ENCODE measurements at regions of chr1 and their contacts with region 1.

Region 1: GRCh38 chr1:16888860-16889816 is 6.6 kb upstream of the RNU1-2 start:
- DNase-seq: peak; percentile 26 to 78 (median 56)
- ATAC-seq: peak; percentile 74
- H3K4me3 ChIP-seq: peak overlapping the region; percentile 70
- H3K4me3 Mint-ChIP-seq: peak overlapping the region; percentile 95
- H3K27ac ChIP-seq: peak overlapping the region; percentile 29 to 54
- H3K27ac Mint-ChIP-seq: peak overlapping the region; percentile 92
- H3K4me1 ChIP-seq: peaks cover 16% of the 10 kb centered on the region
- H3K4me1 Mint-ChIP-seq: peaks cover 27% of the 10 kb centered on the region
- H3K27me3 ChIP-seq: no peaks in the 10 kb centered on the region
- H3K27me3 Mint-ChIP-seq: no peaks in the 10 kb centered on the region
- CTCF ChIP-seq: peak; percentile 12

Region 2: GRCh38 chr1:16904560-16905111 is 15.5 kb after region 1 on chr1:
- CTCF ChIA-PET with region 1: no interaction called
- POLR2A ChIA-PET with region 1: interaction called, 65 read pairs
- intact Hi-C with region 1: no loop called
- DNase-seq: peak; percentile 97 to 100 (median 99)
- ATAC-seq: peak; percentile 93
- H3K4me3 ChIP-seq: peak overlapping the region; percentile 63
- H3K4me3 Mint-ChIP-seq: no peak overlapping the region
- H3K27ac ChIP-seq: peak overlapping the region; percentile 98 to 99
- H3K27ac Mint-ChIP-seq: no peak overlapping the region
- H3K4me1 ChIP-seq: peaks cover 55% of the 10 kb centered on the region
- H3K4me1 Mint-ChIP-seq: peaks cover 36% of the 10 kb centered on the region
- H3K27me3 ChIP-seq: no peaks in the 10 kb centered on the region
- H3K27me3 Mint-ChIP-seq: no peaks in the 10 kb centered on the region
- CTCF ChIP-seq: no peak

Region 3: DNA sequence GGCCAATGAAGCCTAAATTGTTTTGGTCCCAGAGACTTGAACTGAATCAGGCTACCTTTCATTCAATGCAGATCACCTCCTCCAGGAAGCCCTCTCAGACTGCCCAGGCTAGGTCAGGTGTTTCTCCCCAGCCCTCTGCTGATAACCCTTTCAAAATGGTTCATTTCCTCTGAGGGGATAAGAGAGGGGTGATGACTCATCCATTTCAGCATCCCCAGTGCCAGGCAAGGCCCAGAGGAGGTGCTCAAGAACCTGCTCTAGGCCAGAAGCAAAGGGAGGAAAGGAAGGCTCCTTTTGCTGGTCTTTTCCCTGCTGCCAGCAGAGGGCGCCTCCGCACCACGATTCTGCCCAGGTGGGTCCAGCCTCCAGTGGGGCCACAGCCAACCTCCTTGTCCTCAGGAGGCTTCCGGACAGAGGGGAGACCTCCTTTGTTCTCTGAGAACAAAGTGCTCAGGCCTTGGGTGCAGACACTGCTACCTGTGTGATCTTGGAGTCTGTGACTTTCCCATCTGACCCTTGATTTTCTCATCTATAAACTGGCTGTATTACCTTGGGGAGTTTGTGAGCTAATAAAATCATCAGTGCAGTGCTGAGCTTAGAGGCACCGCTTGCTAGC is 605.1 kb after region 1 on chr1:
- CTCF ChIA-PET with region 1: no interaction called
- POLR2A ChIA-PET with region 1: no interaction called
- intact Hi-C with region 1: no loop called
- DNase-seq: peak; percentile 36 to 73 (median 45)
- ATAC-seq: peak; percentile 70
- H3K4me3 ChIP-seq: no peak overlapping the region
- H3K4me3 Mint-ChIP-seq: no peak overlapping the region
- H3K27ac ChIP-seq: no peak overlapping the region
- H3K27ac Mint-ChIP-seq: no peak overlapping the region
- H3K4me1 ChIP-seq: no peaks in the 10 kb centered on the region
- H3K4me1 Mint-ChIP-seq: no peaks in the 10 kb centered on the region
- H3K27me3 ChIP-seq: no peaks in the 10 kb centered on the region
- H3K27me3 Mint-ChIP-seq: peaks cover 19% of the 10 kb centered on the region
- CTCF ChIP-seq: peak; percentile 71